Heart left ventricle (tissue), 16 donors: ENCODE measurements at regions of chr15 and their contacts with region 1.

Region 1: DNA sequence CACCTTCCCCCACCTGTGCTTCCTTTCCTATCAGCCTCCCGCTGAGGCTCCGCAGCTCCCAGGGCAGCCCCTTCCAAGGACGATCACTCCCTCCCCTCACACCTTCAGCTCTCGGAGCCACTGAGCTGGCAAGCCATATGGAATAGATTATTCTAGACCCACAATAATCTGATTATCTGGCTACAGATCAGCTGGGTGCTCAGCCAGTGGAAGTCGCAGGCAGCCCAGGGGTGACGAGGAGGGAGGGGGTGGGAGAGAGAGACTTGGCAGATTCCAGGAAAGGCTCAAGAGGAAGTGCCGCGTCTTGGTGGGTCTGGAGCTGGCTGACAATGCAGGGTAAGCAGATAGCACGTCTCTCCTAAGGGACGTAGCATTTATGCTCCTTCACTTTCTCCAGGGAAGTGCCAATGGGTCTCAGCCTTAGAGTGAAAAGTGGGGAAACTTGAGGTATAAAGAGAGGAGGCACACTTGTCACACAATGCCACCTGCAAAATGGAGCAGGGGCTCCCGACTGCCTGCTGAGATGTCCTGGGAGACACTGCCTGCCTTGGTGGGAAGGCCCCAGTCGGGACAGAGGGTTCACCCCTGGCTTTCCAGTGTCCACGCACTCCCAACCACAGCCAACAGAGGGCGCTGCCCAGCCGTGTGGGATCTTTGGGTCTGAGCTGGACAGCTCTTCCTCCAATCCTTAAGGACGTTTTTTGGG is 9.4 kb upstream of the MESP1 start:
- DNase-seq: peak; percentile 67 to 89 (median 77)
- ATAC-seq: peak; percentile 76 to 93 (median 90)
- H3K4me3 ChIP-seq: no peak overlapping the region
- H3K27ac ChIP-seq: no peak overlapping the region
- H3K4me1 ChIP-seq: peaks cover 0 to 12% (median 0%) of the 10 kb centered on the region in 12 donors
- H3K27me3 ChIP-seq: no peaks in the 10 kb centered on the region
- CTCF ChIP-seq: peak; percentile 91 to 97 (median 94)
- POLR2A ChIP-seq: no peak

Region 2: DNA sequence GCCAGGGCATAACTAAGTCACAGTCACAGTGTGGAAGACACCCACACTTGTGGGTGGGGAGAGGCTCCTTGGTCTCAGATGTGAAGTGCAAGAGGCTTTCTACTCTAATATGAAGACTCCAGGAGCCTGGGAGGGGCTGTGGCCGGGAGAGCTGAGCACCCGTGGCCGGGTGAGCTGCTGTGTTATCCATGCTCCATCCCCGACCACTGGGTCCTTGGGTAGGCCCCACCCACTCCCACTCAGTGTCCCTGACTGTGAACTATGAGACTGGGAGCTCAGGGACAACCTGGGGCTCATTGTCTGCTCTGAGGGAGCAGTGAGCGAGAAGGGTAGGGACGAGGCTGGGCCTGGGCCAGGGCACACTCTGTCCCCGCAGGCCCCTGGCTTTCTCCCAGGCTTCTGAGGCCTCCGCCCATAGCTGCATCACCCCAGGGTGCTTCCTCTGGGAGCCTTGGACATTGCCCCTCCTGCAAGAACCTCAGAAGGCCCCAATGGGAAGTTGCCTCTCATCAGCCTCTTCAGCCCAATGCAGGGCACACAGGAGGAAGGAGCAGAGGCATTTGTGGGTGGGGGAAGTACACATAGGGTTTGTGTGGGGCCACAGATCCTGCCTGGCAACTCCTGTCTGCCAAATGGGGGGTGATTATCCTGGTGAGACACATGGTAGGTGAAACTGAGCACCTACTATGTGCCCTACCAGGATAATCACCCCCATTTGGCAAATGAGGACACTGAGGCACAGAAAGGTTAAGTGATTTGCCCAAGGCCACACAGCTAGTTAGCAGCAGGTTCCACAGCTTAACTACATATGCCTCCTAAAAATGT is 51.8 kb after region 1 on chr15:
- intact Hi-C with region 1: no loop called
- DNase-seq: peak in 4 of 5 donors; percentile 29 to 72 (median 58)
- ATAC-seq: peak; percentile 72 to 82 (median 82)
- H3K4me3 ChIP-seq: peak overlapping the region in 1 of 12 donors; percentile 69
- H3K27ac ChIP-seq: peak overlapping the region in 2 of 12 donors; percentile 18 to 54
- H3K4me1 ChIP-seq: peaks cover 0 to 44% (median 12%) of the 10 kb centered on the region in 12 donors
- H3K27me3 ChIP-seq: peaks cover 8 to 39% (median 22%) of the 10 kb centered on the region in 9 donors
- CTCF ChIP-seq: no peak
- POLR2A ChIP-seq: no peak

Region 3: GRCh38 chr15:89874926-89875564 is 114.6 kb after region 1 on chr15:
- intact Hi-C with region 1: loop called (anchors 1 to 2 kb)
- DNase-seq: peak; percentile 66 to 89 (median 79)
- ATAC-seq: peak; percentile 78 to 95 (median 94)
- H3K4me3 ChIP-seq: no peak overlapping the region
- H3K27ac ChIP-seq: no peak overlapping the region
- H3K4me1 ChIP-seq: peaks cover 0 to 25% (median 0%) of the 10 kb centered on the region in 12 donors
- H3K27me3 ChIP-seq: no peaks in the 10 kb centered on the region
- CTCF ChIP-seq: peak; percentile 87 to 98 (median 92)
- POLR2A ChIP-seq: no peak